Activated T-helper 1 cell treated with anti-CD3 and anti-CD28 coated beads, Interleukin-12 subunit alpha, Interleukin-12 subunit beta, Interleukin-2, Interleukin-4 antibody, amounts not matched to agents 30 ng/mL and 10 ng/mL and 1 ng/mL, durations not matched to agents 14 hours and 24 hours and 36 hours (primary cell): ENCODE measurements at regions of chr4 and their contacts with region 1.

Region 1: GRCh38 chr4:174631901-174632758 is 109.8 kb upstream of the HPGD start:
- DNase-seq: no peak
- H3K4me3 Mint-ChIP-seq: no peak overlapping the region
- H3K27ac Mint-ChIP-seq: no peak overlapping the region
- H3K4me1 Mint-ChIP-seq: peaks cover 6% of the 10 kb centered on the region
- H3K27me3 Mint-ChIP-seq: peaks cover 2% of the 10 kb centered on the region

Region 2: DNA sequence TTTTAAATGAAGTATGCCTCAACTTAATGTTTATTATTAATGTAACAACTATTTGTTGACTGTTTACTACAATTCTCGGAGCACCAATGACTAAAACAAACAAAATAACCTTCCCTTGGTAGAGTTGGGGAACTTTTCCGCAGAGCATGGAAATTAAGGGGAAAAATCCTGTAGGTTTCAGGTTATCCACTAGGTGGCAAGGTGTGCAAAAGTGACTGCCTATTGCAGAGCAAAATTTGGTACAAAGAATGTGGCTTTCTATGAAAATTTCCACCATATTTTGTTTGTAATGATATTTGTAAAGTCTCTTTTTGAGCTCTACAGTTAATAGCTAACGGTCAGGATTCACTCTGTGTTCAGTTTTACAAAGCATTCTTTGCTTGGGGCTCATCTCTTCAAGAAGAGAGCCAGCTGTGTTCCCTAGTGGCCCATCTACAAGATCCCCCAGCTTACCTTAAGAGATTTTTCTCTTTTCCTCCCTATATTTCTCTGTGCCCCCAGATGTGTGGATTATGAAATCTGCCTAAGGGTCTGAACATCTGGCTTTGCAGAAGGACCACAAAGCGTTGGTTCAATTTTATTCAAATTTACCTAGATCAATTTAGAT is 409.8 kb before region 1 on chr4:
- intact Hi-C with region 1: loop called (anchors 2 kb)
- DNase-seq: no peak
- H3K4me3 Mint-ChIP-seq: no peak overlapping the region
- H3K27ac Mint-ChIP-seq: no peak overlapping the region
- H3K4me1 Mint-ChIP-seq: peaks cover 11% of the 10 kb centered on the region
- H3K27me3 Mint-ChIP-seq: peaks cover 56% of the 10 kb centered on the region

Region 3: DNA sequence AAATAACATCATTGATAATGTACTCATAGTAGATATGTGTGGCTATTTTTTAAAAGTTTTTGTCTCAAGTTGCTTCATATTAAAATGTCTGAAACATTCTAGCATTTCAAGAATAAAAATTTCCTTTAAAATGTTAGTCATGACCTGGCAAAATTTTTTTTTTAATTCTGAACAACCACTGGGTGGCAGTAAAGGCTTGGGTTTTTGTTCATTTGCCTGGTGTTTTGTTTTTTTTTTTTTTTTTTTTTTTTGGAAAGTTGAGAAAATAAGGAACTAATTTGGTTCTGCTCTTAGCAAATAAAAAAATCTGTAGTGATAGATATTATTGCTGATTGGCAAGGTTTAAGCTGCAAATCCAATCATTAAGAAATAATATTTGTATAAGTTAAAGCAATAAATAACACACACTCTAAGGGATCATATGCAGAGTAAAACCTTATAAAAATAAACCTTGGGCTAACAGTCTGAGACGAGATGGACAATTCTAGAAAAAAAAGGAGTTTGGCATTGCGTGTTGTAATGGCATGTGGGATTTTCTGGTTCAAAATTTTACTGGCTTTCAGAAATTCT is 267.0 kb before region 1 on chr4:
- intact Hi-C with region 1: loop called (anchors 1 kb)
- DNase-seq: no peak
- H3K4me3 Mint-ChIP-seq: no peak overlapping the region
- H3K27ac Mint-ChIP-seq: no peak overlapping the region
- H3K4me1 Mint-ChIP-seq: no peaks in the 10 kb centered on the region
- H3K27me3 Mint-ChIP-seq: peaks cover 7% of the 10 kb centered on the region

Region 4: GRCh38 chr4:174449966-174450365 is 182.2 kb before region 1 on chr4:
- intact Hi-C with region 1: no loop called
- DNase-seq: no peak
- H3K4me3 Mint-ChIP-seq: no peak overlapping the region
- H3K27ac Mint-ChIP-seq: no peak overlapping the region
- H3K4me1 Mint-ChIP-seq: no peaks in the 10 kb centered on the region
- H3K27me3 Mint-ChIP-seq: no peaks in the 10 kb centered on the region

Region 5: DNA sequence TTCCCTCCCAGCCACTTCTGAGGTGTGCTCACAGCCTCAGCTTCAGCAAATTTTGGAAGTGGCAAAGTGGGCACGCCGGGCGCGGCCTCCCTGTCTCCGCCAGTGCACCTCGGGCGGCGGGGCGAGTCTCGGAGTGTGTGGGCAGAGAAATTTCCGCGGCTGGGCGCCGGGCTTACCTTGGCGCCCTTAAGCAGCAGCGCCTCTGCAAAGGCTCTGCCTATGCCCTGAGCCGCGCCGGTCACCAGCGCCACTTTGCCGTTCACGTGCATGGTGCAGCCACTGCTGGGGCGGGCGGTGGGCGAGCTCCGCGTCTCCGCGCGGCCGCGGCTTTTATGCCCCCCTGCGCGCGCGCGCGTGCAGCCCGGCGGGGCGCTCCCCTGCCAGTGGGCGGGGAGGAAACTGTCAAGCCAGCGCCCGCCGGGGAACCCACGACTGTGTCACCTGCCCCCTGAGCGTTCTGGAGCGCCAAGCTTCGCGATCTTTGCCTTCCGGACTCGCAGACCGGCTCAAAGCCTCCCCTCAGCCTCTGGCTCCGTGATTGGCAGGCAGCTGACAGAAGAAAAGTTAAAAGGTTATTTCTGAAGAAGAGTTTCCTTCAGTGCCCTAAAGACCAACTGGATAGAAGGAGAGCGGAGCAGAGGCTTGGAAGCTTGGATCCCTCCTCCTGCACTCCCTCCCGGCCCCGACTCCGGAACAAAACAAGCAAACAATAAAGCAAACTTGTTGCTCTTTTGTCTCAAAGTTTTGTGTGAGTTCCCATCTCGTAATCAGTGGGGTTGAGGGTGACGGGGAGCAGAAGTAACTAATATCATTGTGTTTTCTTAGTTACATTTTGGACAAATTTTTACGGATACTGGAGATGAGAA is 109.7 kb before region 1 on chr4 and contains the start of gene HPGD:
- intact Hi-C with region 1: loop called (anchors 2 kb)
- DNase-seq: peak; percentile 56
- H3K4me3 Mint-ChIP-seq: peak within 1 kb of the TSS; percentile 85
- H3K27ac Mint-ChIP-seq: peak within 1 kb of the TSS; percentile 74
- H3K4me1 Mint-ChIP-seq: peaks cover 23% of the 10 kb centered on the region
- H3K27me3 Mint-ChIP-seq: peaks cover 50% of the 10 kb centered on the region
- total RNA-seq, gene HPGD: 2.6 and 3.1 TPM in 2 replicates

Region 6: DNA sequence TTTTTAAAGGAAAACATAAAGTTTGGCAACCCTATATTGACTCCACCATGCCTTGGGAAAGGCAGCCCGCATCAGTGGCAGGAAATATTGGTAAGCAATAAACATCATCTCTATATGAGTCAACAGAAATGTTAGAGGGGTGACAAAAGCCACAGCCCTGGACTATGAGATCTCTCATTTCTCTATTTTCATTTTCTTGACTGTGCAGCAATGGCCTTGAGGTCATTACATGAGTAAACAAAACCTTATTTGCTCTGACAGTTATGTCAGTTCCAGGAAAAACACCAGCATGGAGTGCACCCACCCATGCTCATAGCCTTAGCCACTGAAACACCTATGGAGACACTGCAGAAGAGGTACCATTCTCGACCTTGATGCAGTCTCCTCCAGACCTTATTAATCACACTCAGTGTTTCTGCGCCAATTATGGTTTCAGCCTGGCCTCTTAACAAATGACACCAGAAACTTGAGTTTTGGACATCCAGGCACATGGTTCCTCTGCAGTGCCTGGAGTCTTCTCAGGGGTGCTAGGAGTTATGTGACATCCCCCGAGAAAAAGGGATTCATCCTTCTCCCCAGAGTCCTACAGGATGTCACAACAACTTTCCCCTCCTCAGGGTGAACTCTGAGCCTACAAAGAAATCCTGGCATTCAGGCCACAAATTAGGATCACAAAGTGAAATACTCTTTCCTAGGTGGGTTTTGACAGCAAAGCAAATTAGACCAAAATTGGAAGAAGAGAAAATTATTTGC is 93.8 kb before region 1 on chr4:
- intact Hi-C with region 1: loop called (anchors 5 kb)
- DNase-seq: peak; percentile 12
- H3K4me3 Mint-ChIP-seq: no peak overlapping the region
- H3K27ac Mint-ChIP-seq: peak overlapping the region; percentile 75
- H3K4me1 Mint-ChIP-seq: peaks cover 31% of the 10 kb centered on the region
- H3K27me3 Mint-ChIP-seq: peaks cover 5% of the 10 kb centered on the region

Region 7: GRCh38 chr4:174714393-174715211 is 82.5 kb after region 1 on chr4:
- intact Hi-C with region 1: loop called (anchors 2 kb)
- DNase-seq: no peak
- H3K4me3 Mint-ChIP-seq: no peak overlapping the region
- H3K27ac Mint-ChIP-seq: no peak overlapping the region
- H3K4me1 Mint-ChIP-seq: no peaks in the 10 kb centered on the region
- H3K27me3 Mint-ChIP-seq: peaks cover 8% of the 10 kb centered on the region